Transverse colon (tissue), 4 donors: ENCODE measurements at regions of chr14 and their contacts with region 1.

Region 1: DNA sequence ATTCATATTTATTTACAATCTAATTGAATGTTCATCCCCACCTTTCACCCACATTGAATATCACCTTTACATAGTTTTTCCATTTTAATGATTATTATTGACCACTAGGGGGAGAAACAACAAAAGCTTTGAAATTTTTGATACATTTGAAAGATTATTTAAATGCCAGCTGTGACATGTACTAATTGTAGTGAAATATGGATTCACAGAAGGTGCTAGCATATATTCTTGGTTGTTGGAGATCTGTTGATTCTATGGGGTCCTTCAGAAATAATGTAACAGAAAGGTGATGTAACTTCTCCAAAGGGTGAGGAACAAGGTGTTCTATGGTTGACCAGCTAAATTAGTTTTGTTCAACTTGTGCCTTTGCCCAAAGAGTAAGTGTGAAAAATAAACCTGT is 22.4 kb upstream of the GPR33 start:
- DNase-seq: no peak
- H3K4me3 ChIP-seq: no peak overlapping the region
- H3K27ac ChIP-seq: no peak overlapping the region
- H3K4me1 ChIP-seq: no peaks in the 10 kb centered on the region
- H3K27me3 ChIP-seq: no peaks in the 10 kb centered on the region
- CTCF ChIP-seq: peak; percentile 62 to 78 (median 68)
- EP300 ChIP-seq: no peak
- POLR2A ChIP-seq: no peak

Region 2: GRCh38 chr14:31902002-31902401 is 391.8 kb after region 1 on chr14:
- in situ Hi-C with region 1: loop called in 2 of 4 experiments (anchors 25 kb)
- intact Hi-C with region 1: no loop called
- DNase-seq: no peak
- H3K4me3 ChIP-seq: no peak overlapping the region
- H3K27ac ChIP-seq: no peak overlapping the region
- H3K4me1 ChIP-seq: no peaks in the 10 kb centered on the region
- H3K27me3 ChIP-seq: no peaks in the 10 kb centered on the region
- CTCF ChIP-seq: no peak
- EP300 ChIP-seq: no peak
- POLR2A ChIP-seq: no peak

Region 3: DNA sequence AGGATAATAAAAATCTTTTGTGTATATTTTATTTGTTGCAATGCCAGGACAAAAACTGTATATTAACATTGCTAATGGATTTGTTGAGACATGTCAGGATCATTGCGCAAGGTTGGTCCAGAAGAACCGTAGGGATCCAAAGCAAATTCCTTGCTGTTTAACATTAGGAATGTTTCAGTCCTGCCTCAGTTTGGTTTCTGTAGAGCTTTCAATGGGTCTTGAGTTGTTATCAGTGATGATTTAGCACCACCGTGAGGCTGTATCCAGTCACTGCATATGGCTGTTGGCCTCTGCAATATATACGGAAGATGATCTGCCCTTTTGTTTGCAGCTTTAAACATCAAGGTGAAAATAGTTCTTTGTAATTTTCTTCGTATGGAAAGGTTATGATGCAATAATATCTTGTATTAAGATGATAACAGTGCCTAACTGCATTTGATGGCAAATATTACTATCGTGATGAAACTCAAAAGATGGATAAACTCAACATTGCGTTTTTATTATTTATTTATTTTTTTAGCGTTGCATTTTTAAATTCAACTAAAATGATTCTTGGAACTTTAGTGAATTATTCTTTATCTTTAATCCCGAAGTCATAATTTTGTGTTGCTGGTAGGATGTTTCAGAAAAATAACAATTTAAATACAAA is 1050.1 kb after region 1 on chr14:
- in situ Hi-C with region 1: loop called in 1 of 4 experiments (anchors 25 kb)
- intact Hi-C with region 1: no loop called
- DNase-seq: peak; percentile 57
- H3K4me3 ChIP-seq: no peak overlapping the region
- H3K27ac ChIP-seq: peak overlapping the region; percentile 48 to 79 (median 63)
- H3K4me1 ChIP-seq: peaks cover 3 to 18% (median 10%) of the 10 kb centered on the region in 4 donors
- H3K27me3 ChIP-seq: no peaks in the 10 kb centered on the region
- CTCF ChIP-seq: peak; percentile 83 to 92 (median 88)
- EP300 ChIP-seq: no peak
- POLR2A ChIP-seq: no peak